OCI-LY7 (cell line): ENCODE measurements at regions of chrX and their contacts with region 1.

Region 1: DNA sequence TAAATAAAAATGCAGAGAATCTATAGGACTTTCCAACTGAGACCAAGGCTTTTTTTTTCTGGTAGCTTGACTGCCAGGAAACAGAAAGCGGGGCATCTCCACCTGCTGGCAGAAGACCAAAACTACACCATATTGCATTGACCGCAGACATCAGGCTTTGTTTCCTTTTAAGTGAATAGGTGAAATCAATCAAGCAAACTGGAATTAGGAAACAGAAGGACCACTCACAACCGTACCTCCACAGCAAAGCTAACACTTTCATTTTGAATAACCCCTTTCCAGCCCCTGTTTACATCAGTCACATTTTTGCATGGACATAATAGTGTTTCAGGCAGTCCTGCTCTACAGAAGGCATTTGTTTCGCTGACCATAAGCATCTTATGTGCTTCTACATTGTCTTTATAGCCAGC is 218.2 kb downstream of the IDS start:
- DNase-seq: peak; percentile 57
- H3K4me3 ChIP-seq: no peak overlapping the region
- H3K27ac ChIP-seq: no peak overlapping the region
- H3K4me1 ChIP-seq: no peaks in the 10 kb centered on the region
- CTCF ChIP-seq: peak; percentile 79

Region 2: DNA sequence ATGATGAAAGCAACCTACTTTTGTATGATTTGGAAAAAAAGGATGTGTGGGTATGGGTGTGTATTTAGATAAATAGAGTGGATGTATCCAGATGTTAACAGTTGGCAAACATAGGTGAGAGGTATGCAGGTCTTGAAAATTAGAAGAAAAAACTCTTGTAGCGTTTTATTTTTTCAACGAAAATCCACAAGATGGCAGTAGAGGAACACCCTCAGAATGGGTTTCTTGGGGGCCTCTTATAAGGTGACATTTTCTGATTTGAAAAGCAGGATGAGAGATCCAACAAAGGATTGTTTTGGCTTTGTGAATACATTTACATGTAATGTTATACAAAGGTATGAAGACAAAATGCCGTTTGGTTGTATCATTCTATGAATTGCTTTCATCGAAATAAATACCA is 1237.5 kb before region 1 on chrX:
- CTCF ChIA-PET with region 1: no interaction called
- POLR2A ChIA-PET with region 1: no interaction called
- intact Hi-C with region 1: loop called (anchors 2 kb)
- DNase-seq: peak; percentile 60
- H3K4me3 ChIP-seq: no peak overlapping the region
- H3K27ac ChIP-seq: no peak overlapping the region
- H3K4me1 ChIP-seq: no peaks in the 10 kb centered on the region
- CTCF ChIP-seq: peak; percentile 82

Region 3: DNA sequence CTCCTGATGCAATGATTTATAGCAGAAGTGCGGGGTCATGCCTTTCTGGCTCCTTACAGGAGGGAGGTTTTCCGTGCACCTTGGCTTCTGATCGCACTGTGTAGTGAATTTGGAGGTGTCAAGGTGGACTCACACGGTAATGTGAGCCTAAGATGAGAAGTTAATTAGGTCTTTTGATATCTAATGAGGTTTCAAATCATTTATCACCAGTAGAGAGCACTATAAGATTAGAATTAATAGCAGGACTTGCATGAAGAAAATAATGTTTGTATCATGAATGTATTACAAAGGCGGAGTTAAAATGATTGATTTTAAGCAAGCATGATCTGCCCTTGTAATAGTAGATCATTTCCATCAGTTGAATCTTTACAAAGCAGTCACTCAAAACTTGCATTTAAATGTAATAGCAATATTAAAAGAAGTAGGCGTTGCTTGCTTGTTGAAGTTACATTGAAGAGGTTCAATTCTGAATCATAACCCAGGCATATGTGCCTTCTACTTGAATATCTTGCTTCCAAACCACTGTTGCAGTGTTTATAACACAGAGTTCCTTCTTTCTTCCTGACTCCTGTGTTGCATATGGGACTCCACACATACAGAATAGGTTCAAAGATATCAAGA is 1153.7 kb before region 1 on chrX:
- CTCF ChIA-PET with region 1: no interaction called
- POLR2A ChIA-PET with region 1: no interaction called
- intact Hi-C with region 1: loop called (anchors 2 kb)
- DNase-seq: peak; percentile 64
- H3K4me3 ChIP-seq: no peak overlapping the region
- H3K27ac ChIP-seq: no peak overlapping the region
- H3K4me1 ChIP-seq: peaks cover 14% of the 10 kb centered on the region
- CTCF ChIP-seq: peak; percentile 72